OCI-LY7 (cell line): ENCODE measurements at regions of chr2 and their contacts with region 1.

Region 1: GRCh38 chr2:238097998-238098871 is 1.9 kb upstream of the ESPNL start:
- DNase-seq: peak; percentile 88
- H3K4me3 ChIP-seq: peak overlapping the region; percentile 18
- H3K27ac ChIP-seq: peak overlapping the region; percentile 6
- H3K4me1 ChIP-seq: peaks cover 12% of the 10 kb centered on the region
- CTCF ChIP-seq: no peak

Region 2: GRCh38 chr2:237744613-237745249 is 353.5 kb before region 1 on chr2:
- CTCF ChIA-PET with region 1: no interaction called
- POLR2A ChIA-PET with region 1: no interaction called
- intact Hi-C with region 1: no loop called
- DNase-seq: peak; percentile 55
- H3K4me3 ChIP-seq: no peak overlapping the region
- H3K27ac ChIP-seq: no peak overlapping the region
- H3K4me1 ChIP-seq: peaks cover 13% of the 10 kb centered on the region
- CTCF ChIP-seq: peak; percentile 99

Region 3: DNA sequence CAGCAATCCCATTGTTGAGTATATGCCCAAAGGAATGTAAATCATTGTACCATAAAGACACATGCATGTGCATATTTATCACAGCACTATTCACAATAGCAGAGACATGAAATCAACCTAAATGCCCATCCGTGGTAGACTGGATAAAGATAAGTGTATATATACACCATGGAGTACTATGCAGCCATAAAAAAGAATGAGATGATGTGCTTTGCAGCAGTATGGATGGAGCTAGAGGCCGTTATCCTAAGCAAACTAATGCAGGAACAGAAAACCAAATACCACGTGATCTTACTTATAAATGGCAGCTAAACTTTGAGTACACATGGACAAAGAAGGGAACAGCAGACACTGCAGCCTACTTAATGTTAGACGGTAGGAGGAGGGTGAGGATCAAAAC is 257.2 kb before region 1 on chr2:
- CTCF ChIA-PET with region 1: no interaction called
- POLR2A ChIA-PET with region 1: no interaction called
- intact Hi-C with region 1: no loop called
- DNase-seq: no peak
- H3K4me3 ChIP-seq: no peak overlapping the region
- H3K27ac ChIP-seq: no peak overlapping the region
- H3K4me1 ChIP-seq: no peaks in the 10 kb centered on the region
- CTCF ChIP-seq: no peak

Region 4: GRCh38 chr2:238087211-238087610 is 11.0 kb before region 1 on chr2:
- CTCF ChIA-PET with region 1: interaction called, 4 read pairs
- POLR2A ChIA-PET with region 1: interaction called, 12 read pairs
- intact Hi-C with region 1: no loop called
- DNase-seq: peak; percentile 27
- H3K4me3 ChIP-seq: no peak overlapping the region
- H3K27ac ChIP-seq: no peak overlapping the region
- H3K4me1 ChIP-seq: peaks cover 10% of the 10 kb centered on the region
- CTCF ChIP-seq: no peak

Region 5: GRCh38 chr2:238117191-238118154 is 19.2 kb after region 1 on chr2:
- CTCF ChIA-PET with region 1: no interaction called
- POLR2A ChIA-PET with region 1: no interaction called
- intact Hi-C with region 1: no loop called
- DNase-seq: no peak
- H3K4me3 ChIP-seq: no peak overlapping the region
- H3K27ac ChIP-seq: no peak overlapping the region
- H3K4me1 ChIP-seq: peaks cover 10% of the 10 kb centered on the region
- CTCF ChIP-seq: no peak